Activated CD4-positive, alpha-beta T cell treated with anti-CD3 and anti-CD28 coated beads, Interleukin-2, amount 10 ng/mL, durations not matched to agents 24 days and 14 days (primary cell): ENCODE measurements at regions of chr14 and their contacts with region 1.

Region 1: GRCh38 chr14:52473557-52473956 is 78.7 kb downstream of the TXNDC16 start:
- DNase-seq: peak; percentile 69
- H3K4me3 Mint-ChIP-seq: no peak overlapping the region
- H3K27ac Mint-ChIP-seq: no peak overlapping the region
- H3K4me1 Mint-ChIP-seq: peaks cover 21% of the 10 kb centered on the region
- H3K27me3 Mint-ChIP-seq: no peaks in the 10 kb centered on the region

Region 2: GRCh38 chr14:52299692-52300278 is 173.8 kb before region 1 on chr14:
- intact Hi-C with region 1: loop called (anchors 1 kb)
- DNase-seq: peak; percentile 76
- H3K4me3 Mint-ChIP-seq: no peak overlapping the region
- H3K27ac Mint-ChIP-seq: no peak overlapping the region
- H3K4me1 Mint-ChIP-seq: peaks cover 47% of the 10 kb centered on the region
- H3K27me3 Mint-ChIP-seq: peaks cover 2% of the 10 kb centered on the region